Psoas muscle (tissue), 8 donors: ENCODE measurements at regions of chr3 and their contacts with region 1.

Region 1: GRCh38 chr3:179732661-179733348 is 80.0 kb downstream of the USP13 start:
- DNase-seq: peak; percentile 84 to 93
- ATAC-seq: peak; percentile 75 to 82 (median 80)
- H3K4me3 ChIP-seq: no peak overlapping the region
- H3K27ac ChIP-seq: peak overlapping the region; percentile 94
- H3K4me1 ChIP-seq: peaks cover 54% of the 10 kb centered on the region
- H3K27me3 ChIP-seq: no peaks in the 10 kb centered on the region
- CTCF ChIP-seq: no peak

Region 2: DNA sequence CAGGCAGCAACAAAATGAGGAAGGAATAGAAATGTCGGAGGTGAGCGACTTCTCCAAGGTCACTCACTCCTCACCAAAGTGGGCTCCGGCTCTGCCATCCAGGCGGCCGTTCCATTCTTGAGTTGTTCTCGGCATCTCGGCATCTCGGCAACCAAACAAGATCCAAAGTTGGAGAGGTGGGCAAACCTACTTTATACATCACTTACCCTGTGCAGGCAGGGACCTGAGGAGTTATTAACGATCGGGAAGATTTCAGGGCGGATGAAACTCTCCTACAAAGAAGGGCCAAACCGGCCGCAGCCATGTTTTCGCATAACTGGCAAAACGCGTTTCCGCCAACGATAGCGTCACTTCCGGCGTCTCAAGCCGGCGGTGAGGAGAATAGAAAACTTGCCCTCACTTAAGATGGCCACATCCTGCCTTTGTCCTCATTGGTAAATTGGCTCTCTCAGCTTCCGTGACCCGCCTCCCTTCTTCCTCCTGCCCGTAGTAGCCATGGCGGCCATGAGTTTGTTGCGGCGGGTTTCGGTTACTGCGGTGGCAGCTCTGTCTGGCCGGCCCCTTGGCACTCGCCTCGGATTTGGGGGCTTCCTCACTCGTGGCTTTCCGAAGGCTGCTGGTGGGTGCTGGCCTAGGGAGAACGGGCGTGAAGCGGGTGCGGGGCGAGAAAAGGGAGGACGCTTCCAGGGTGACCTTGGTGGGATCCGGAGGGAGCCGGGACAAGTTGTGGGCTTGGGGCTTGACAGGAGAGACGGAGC is 128.3 kb before region 1 on chr3 and contains the starts of genes MRPL47 and NDUFB5:
- intact Hi-C with region 1: loop called in 1 of 2 experiments (anchors 5 kb)
- DNase-seq: peak; percentile 93 to 96
- ATAC-seq: peak; percentile 100
- H3K4me3 ChIP-seq: peak within 1 kb of the TSS; percentile 82
- H3K27ac ChIP-seq: peak within 1 kb of the TSS; percentile 86
- H3K4me1 ChIP-seq: peaks cover 27% of the 10 kb centered on the region
- H3K27me3 ChIP-seq: no peaks in the 10 kb centered on the region
- CTCF ChIP-seq: no peak
- total RNA-seq, gene MRPL47: 29.4 to 62.6 (median 38.8) TPM
- total RNA-seq, gene NDUFB5: 161 to 233 (median 206) TPM

Region 3: GRCh38 chr3:179653096-179653797 is 79.6 kb before region 1 on chr3:
- intact Hi-C with region 1: loop called (anchors 2 kb)
- DNase-seq: peak; percentile 78 to 90
- ATAC-seq: peak; percentile 77 to 82 (median 80)
- H3K4me3 ChIP-seq: peak overlapping the region; percentile 91
- H3K27ac ChIP-seq: peak overlapping the region; percentile 98
- H3K4me1 ChIP-seq: peaks cover 33% of the 10 kb centered on the region
- H3K27me3 ChIP-seq: no peaks in the 10 kb centered on the region
- CTCF ChIP-seq: no peak